A549 (cell line): ENCODE measurements at regions of chr2 and their contacts with region 1.

Region 1: DNA sequence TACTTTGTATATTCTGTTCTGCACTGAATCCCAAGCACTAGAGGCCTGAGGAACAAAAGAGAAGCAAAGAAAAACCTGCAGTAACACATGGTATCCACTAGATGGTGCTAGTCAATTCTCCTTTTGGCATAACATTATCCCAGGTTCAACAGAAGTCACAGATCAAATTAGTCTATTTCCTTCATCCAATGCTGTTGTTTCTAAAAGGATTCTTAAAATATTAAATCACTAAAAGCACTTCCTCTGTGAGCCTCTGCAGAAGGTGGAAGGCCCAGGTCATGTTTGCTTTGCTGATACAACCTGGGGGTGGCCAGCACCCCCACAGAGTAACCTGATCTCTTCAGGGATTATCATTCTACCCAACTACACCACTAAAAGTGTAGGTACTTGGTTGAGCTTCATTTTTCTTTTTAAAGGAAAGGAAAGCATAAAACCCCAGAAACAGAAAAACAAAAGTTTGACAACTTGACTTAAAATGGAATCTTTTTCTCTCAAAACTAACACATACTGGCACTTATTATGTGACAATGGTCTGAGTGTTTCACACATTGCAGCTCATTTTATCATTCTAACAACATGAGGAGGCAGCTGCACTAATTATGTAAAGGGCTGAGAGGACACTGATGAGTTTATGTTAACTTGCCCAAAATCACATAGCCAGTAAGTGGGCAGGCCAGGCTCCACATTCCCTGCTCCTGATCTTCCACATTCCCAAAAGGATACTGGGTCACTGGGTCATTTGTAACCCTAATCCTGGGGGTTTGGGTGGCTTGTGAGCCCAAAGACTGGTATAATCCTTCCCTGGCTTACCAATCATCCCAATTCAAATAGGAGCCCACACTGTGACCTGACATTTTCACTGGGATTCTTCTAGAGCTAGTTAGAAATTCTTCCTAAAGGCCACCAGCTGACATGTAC is 66.8 kb upstream of the DNER start:
- DNase-seq: peak; percentile 24 to 45
- ATAC-seq: peak; percentile 84 to 91
- H3K4me3 ChIP-seq: no peak overlapping the region
- H3K27ac ChIP-seq: no peak overlapping the region
- H3K4me1 ChIP-seq: no peaks in the 10 kb centered on the region
- CTCF ChIP-seq: peak; percentile 77
- EP300 ChIP-seq: no peak
- POLR2A ChIP-seq: no peak
- RAD21 ChIP-seq: peak; percentile 35 to 47; a peak in 3 of 5 replicates

Region 2: DNA sequence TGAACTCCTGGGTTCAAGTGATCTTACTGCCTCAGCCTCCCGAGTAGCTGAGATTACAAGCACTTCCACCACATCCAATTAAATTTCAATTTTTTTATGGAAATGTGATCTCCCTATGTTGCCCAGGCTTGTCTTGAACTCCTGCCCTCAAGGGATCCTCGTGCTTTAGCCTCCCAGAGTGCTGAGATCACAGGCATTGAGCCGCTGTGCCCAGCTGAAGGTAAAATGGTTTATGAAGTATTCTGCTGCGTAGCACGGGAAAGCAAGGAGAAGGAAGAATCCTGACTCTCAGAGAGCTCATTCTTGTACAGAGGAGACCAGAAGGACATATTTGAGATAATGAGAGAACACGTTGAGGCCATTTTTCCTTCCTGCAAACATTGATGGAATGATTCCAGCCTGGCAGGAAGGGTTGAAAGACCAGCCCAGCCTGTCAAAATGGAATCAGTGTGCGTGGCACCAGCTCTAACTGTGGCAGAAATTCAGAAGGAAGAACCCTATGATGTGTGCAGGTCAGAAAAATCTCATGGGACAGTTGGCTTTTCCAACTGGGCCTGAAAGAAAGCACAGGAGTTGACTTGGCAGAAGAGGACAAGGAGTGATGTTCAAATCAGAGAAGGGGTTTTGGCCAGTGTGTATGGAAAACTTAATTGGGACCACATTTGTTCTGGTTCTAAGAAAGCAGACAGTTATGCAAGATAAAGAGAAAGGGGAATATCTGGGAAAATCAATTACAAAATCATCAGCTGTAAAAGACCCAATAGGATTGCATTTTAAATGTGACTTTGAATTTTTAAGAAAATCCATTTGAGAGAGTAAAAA is 317.4 kb before region 1 on chr2:
- CTCF ChIA-PET with region 1: no interaction called
- POLR2A ChIA-PET with region 1: no interaction called
- DNase-seq: no peak
- ATAC-seq: no peak
- H3K4me3 ChIP-seq: no peak overlapping the region
- H3K27ac ChIP-seq: no peak overlapping the region
- H3K4me1 ChIP-seq: no peaks in the 10 kb centered on the region
- CTCF ChIP-seq: no peak
- EP300 ChIP-seq: no peak
- POLR2A ChIP-seq: no peak
- RAD21 ChIP-seq: no peak

Region 3: GRCh38 chr2:229768235-229768634 is 12.9 kb before region 1 on chr2:
- CTCF ChIA-PET with region 1: interaction called, 15 read pairs
- POLR2A ChIA-PET with region 1: no interaction called
- DNase-seq: no peak
- ATAC-seq: no peak
- H3K4me3 ChIP-seq: no peak overlapping the region
- H3K27ac ChIP-seq: no peak overlapping the region
- H3K4me1 ChIP-seq: no peaks in the 10 kb centered on the region
- CTCF ChIP-seq: no peak
- EP300 ChIP-seq: no peak
- POLR2A ChIP-seq: no peak
- RAD21 ChIP-seq: no peak

Region 4: GRCh38 chr2:230472621-230473018 is 691.5 kb after region 1 on chr2:
- CTCF ChIA-PET with region 1: no interaction called
- POLR2A ChIA-PET with region 1: no interaction called
- DNase-seq: peak in 1 of 2 experiments; percentile 29
- ATAC-seq: peak; percentile 38 to 50; a peak in 4 of 6 replicates
- H3K4me3 ChIP-seq: no peak overlapping the region
- H3K27ac ChIP-seq: no peak overlapping the region
- H3K4me1 ChIP-seq: no peaks in the 10 kb centered on the region
- CTCF ChIP-seq: no peak
- EP300 ChIP-seq: no peak
- POLR2A ChIP-seq: no peak
- RAD21 ChIP-seq: no peak